HepG2 (cell line): ENCODE measurements at regions of chr3 and their contacts with region 1.

Region 1: DNA sequence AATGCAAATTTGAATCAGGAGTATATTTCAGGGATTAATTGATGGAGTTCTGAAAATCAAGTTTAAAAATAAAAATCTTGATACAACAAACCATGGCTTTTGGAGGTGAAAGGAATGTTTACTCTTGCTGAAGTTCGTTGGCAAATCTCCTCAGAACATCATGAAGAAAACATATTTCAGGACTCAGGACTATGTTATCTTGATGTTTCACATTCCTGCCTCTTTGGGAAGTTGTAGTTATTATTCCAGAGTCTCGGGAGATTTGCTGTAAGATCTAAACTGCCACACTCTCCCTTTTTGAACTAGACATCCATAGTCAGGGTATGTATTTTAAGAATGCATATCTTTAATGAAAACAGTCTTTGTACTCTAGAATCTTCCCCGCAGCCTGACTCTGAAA is 271.2 kb downstream of the RBMS3 start:
- DNase-seq: no peak
- ATAC-seq: no peak
- H3K4me3 ChIP-seq: no peak overlapping the region
- H3K27ac ChIP-seq: no peak overlapping the region
- H3K4me1 ChIP-seq: no peaks in the 10 kb centered on the region
- H3K27me3 ChIP-seq: no peaks in the 10 kb centered on the region
- CTCF ChIP-seq: no peak
- EP300 ChIP-seq: no peak
- POLR2A ChIP-seq: no peak
- RAD21 ChIP-seq: no peak

Region 2: GRCh38 chr3:29207427-29207826 is 344.6 kb before region 1 on chr3:
- CTCF ChIA-PET with region 1: no interaction called
- POLR2A ChIA-PET with region 1: no interaction called
- in situ Hi-C with region 1: no loop called
- intact Hi-C with region 1: loop called (anchors 5 kb)
- DNase-seq: no peak
- ATAC-seq: no peak
- H3K4me3 ChIP-seq: no peak overlapping the region
- H3K27ac ChIP-seq: no peak overlapping the region
- H3K4me1 ChIP-seq: no peaks in the 10 kb centered on the region
- H3K27me3 ChIP-seq: no peaks in the 10 kb centered on the region
- CTCF ChIP-seq: no peak
- EP300 ChIP-seq: no peak
- POLR2A ChIP-seq: no peak
- RAD21 ChIP-seq: no peak

Region 3: GRCh38 chr3:29301332-29302019 is 250.6 kb before region 1 on chr3:
- CTCF ChIA-PET with region 1: no interaction called
- POLR2A ChIA-PET with region 1: no interaction called
- in situ Hi-C with region 1: no loop called
- intact Hi-C with region 1: no loop called
- DNase-seq: no peak
- ATAC-seq: no peak
- H3K4me3 ChIP-seq: no peak overlapping the region
- H3K27ac ChIP-seq: no peak overlapping the region
- H3K4me1 ChIP-seq: no peaks in the 10 kb centered on the region
- H3K27me3 ChIP-seq: no peaks in the 10 kb centered on the region; a peak in 1 of 5 replicates
- CTCF ChIP-seq: no peak
- EP300 ChIP-seq: no peak
- POLR2A ChIP-seq: no peak
- RAD21 ChIP-seq: no peak

Region 4: GRCh38 chr3:29759411-29760225 is 207.6 kb after region 1 on chr3:
- CTCF ChIA-PET with region 1: no interaction called
- POLR2A ChIA-PET with region 1: no interaction called
- in situ Hi-C with region 1: no loop called
- intact Hi-C with region 1: no loop called
- DNase-seq: no peak
- ATAC-seq: no peak
- H3K4me3 ChIP-seq: no peak overlapping the region
- H3K27ac ChIP-seq: no peak overlapping the region
- H3K4me1 ChIP-seq: no peaks in the 10 kb centered on the region
- H3K27me3 ChIP-seq: no peaks in the 10 kb centered on the region
- CTCF ChIP-seq: no peak
- EP300 ChIP-seq: no peak
- POLR2A ChIP-seq: no peak
- RAD21 ChIP-seq: no peak